ENCODE measurements at regions of chr19 and their contacts with region 1.

Region 1: DNA sequence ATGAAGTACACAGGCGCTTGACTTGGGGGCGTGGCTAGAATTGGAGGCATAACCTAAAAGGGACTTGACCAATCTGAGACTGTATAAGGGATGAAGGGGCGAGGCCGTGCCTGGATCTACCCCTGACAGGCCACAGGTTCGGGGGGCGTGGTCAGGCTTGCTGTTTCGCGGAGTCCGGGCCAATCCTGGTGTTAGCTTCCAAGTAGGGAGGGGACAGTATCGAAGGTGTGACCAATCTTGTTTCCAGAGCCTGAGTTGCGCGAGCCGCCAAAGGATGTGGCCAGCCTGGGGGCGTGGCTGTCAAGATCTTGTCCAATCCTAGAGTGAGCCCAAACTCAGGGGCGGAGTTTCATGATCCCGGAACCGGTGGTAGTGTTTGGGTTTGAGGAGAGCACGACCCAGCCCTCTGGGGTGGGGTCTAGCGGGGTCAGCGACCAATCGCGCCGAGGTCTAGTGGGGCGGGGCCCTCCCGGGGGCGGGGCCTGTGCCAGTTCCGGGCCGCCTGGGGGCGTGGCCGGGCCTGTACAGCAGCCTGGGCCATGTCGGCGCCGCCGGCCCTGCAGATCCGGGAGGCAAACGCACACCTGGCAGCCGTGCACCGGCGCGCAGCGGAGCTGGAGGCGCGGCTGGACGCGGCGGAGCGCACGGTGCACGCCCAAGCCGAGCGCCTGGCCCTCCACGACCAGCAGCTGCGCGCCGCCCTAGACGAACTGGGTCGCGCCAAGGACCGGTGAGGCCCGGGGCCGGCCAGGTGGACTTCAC is at the start of gene VMAC:
- DNase-seq: peak; percentile 100
- H3K4me3 ChIP-seq: peak within 1 kb of the TSS; percentile 91 to 95 (median 94)
- H3K4me3 Mint-ChIP-seq: peak within 1 kb of the TSS; percentile 83 to 94
- H3K27ac ChIP-seq: peak within 1 kb of the TSS; percentile 95 to 96
- H3K27ac Mint-ChIP-seq: peak within 1 kb of the TSS; percentile 95 to 99 (median 98)
- H3K4me1 ChIP-seq: peaks cover 19 to 22% of the 10 kb centered on the region in 2 donors
- H3K4me1 Mint-ChIP-seq: peaks cover 18% of the 10 kb centered on the region
- H3K27me3 ChIP-seq: no peaks in the 10 kb centered on the region
- H3K27me3 Mint-ChIP-seq: peaks cover 0 to 2% (median 0%) of the 10 kb centered on the region in 3 donors
- CTCF ChIP-seq: no peak
- polyA plus RNA-seq, gene VMAC: 3.1 to 13.0 (median 4.3) TPM

Region 2: DNA sequence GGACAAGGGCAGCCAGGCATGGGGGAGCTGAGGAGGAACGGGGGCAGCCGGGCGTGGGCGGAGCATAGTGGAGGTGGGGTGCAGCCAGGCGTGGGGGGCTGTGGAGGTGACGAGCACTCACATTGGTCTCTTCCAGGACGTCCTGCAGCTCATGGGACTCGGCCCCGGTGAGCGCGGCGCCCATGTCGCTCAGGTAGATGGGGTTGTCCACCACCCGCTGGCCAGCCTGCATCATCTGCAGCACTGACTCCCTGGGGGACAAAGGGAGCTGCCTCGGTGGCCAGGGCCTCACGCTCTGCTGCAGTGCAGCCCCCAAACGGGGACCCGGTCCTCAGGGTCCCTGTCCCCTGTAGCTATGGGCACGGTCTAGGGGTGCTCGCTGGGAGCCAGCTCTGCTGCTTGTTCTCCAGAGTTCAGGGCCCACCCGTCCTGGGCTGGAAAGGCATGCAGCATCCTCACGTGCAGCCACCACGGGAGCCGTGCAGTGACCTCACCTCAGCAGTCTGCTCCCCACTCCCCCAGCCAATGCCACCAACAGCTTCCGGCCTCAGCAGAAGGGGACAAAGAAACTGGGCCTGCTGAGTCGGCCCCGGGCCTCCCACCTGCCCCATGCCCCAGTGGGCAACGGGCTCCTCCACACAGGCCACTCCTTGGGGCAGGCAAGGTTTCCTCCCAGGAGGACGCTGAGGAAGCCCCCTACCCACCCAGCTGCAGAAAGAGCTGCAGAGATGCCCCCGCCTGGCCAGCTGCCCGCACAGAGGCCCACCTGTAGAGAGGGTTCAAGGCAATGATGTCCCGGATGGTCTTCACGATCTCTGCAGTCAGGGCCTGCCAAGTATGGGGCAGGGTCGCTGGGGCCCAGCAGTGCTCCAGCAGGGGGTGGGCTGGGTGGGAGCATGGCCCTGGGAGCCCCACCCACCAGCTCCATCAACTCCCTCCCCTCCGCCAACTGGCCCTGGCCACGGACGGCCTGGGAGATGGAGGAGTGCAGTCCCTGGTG is 196.7 kb before region 1 on chr19:
- intact Hi-C with region 1: no loop called
- DNase-seq: no peak
- H3K4me3 ChIP-seq: no peak overlapping the region
- H3K4me3 Mint-ChIP-seq: no peak overlapping the region
- H3K27ac ChIP-seq: no peak overlapping the region
- H3K27ac Mint-ChIP-seq: peak overlapping the region in 1 of 7 donors; percentile 26
- H3K4me1 ChIP-seq: no peaks in the 10 kb centered on the region
- H3K4me1 Mint-ChIP-seq: no peaks in the 10 kb centered on the region
- H3K27me3 ChIP-seq: no peaks in the 10 kb centered on the region
- H3K27me3 Mint-ChIP-seq: no peaks in the 10 kb centered on the region
- CTCF ChIP-seq: no peak

Region 3: GRCh38 chr19:5790573-5791520 is 113.7 kb before region 1 on chr19 and contains the start of gene DUS3L:
- intact Hi-C with region 1: loop called (anchors 2 to 5 kb)
- DNase-seq: peak; percentile 96 to 97 (median 96)
- H3K4me3 ChIP-seq: peak within 1 kb of the TSS; percentile 47 to 86 (median 67)
- H3K4me3 Mint-ChIP-seq: peak within 1 kb of the TSS; percentile 100
- H3K27ac ChIP-seq: peak within 1 kb of the TSS; percentile 91 to 97
- H3K27ac Mint-ChIP-seq: peak within 1 kb of the TSS; percentile 100
- H3K4me1 ChIP-seq: peaks cover 6 to 21% of the 10 kb centered on the region in 2 donors
- H3K4me1 Mint-ChIP-seq: peaks cover 10% of the 10 kb centered on the region
- H3K27me3 ChIP-seq: no peaks in the 10 kb centered on the region
- H3K27me3 Mint-ChIP-seq: peaks cover 1 to 3% (median 3%) of the 10 kb centered on the region in 3 donors
- CTCF ChIP-seq: no peak
- polyA plus RNA-seq, gene DUS3L: 17.4 to 40.2 (median 23.4) TPM

Region 4: GRCh38 chr19:5977785-5978605 is 73.5 kb after region 1 on chr19 and contains the start of gene RANBP3:
- intact Hi-C with region 1: loop called (anchors 5 to 10 kb)
- DNase-seq: peak; percentile 99 to 100 (median 99)
- H3K4me3 ChIP-seq: peak within 1 kb of the TSS; percentile 72 to 91 (median 91)
- H3K4me3 Mint-ChIP-seq: peak within 1 kb of the TSS; percentile 85 to 91
- H3K27ac ChIP-seq: peak within 1 kb of the TSS; percentile 93
- H3K27ac Mint-ChIP-seq: peak within 1 kb of the TSS; percentile 82 to 95 (median 95)
- H3K4me1 ChIP-seq: peaks cover 23 to 32% of the 10 kb centered on the region in 2 donors
- H3K4me1 Mint-ChIP-seq: peaks cover 40% of the 10 kb centered on the region
- H3K27me3 ChIP-seq: no peaks in the 10 kb centered on the region
- H3K27me3 Mint-ChIP-seq: no peaks in the 10 kb centered on the region
- CTCF ChIP-seq: no peak
- polyA plus RNA-seq, gene RANBP3: 4.5 to 49.5 (median 8.1) TPM

Region 5: GRCh38 chr19:6056801-6057650 is 152.5 kb after region 1 on chr19:
- intact Hi-C with region 1: loop called in 1 of 2 experiments (anchors 10 kb)
- DNase-seq: peak; percentile 98 to 100 (median 99)
- H3K4me3 ChIP-seq: peak overlapping the region in 2 of 3 experiments; percentile 8 to 41
- H3K4me3 Mint-ChIP-seq: peak overlapping the region; percentile 66 to 81
- H3K27ac ChIP-seq: peak overlapping the region; percentile 94 to 97
- H3K27ac Mint-ChIP-seq: peak overlapping the region; percentile 98 to 100 (median 99)
- H3K4me1 ChIP-seq: peaks cover 59% of the 10 kb centered on the region in 2 donors
- H3K4me1 Mint-ChIP-seq: peaks cover 65% of the 10 kb centered on the region
- H3K27me3 ChIP-seq: no peaks in the 10 kb centered on the region
- H3K27me3 Mint-ChIP-seq: peaks cover 0 to 9% (median under 1%) of the 10 kb centered on the region in 3 donors
- CTCF ChIP-seq: no peak

Region 6: DNA sequence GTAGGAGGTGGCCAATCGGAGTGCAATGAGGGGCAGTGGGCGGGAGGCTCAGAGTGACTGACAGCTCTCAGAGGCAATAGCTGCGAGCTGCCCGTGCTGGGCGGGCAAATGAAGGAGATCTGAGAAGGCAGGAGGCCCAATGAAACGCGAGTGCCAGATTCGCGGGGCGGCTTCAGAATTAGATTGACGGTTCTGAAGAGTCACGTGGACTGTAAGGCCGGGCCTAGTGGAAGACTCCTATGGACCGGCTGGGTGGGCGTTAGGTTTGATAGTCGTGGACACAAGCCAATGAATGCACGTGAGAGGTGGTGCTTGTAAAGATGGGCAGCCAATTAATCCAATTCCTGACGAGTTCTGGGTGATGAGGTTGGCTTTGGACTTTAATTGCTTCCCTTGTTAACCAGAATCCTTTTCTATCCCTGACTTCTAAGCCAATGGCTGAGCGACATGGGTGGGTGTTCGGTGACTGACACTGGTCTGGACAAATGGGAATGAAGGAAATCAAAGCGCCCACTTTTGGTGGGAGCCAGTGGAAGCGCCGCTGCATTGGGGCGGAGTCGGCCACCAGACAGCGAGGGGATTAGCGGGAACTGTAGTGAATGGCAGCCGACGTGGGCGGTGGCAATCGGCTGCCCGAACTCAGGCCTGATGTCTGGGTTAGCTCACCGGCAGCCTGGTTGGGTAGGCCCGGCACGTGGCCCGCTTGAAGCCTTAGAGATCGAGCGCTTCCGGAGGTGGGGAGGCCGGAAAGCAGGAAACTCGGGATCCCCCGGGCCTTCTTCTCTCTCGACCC is 520.6 kb after region 1 on chr19:
- intact Hi-C with region 1: loop called in 1 of 2 experiments (anchors 10 kb)
- DNase-seq: peak; percentile 100
- H3K4me3 ChIP-seq: peak overlapping the region in 2 of 3 experiments; percentile 29 to 52
- H3K4me3 Mint-ChIP-seq: peak overlapping the region; percentile 69 to 75
- H3K27ac ChIP-seq: peak overlapping the region; percentile 83 to 85
- H3K27ac Mint-ChIP-seq: peak overlapping the region; percentile 86 to 95 (median 91)
- H3K4me1 ChIP-seq: peaks cover 23 to 34% of the 10 kb centered on the region in 2 donors
- H3K4me1 Mint-ChIP-seq: peaks cover 37% of the 10 kb centered on the region
- H3K27me3 ChIP-seq: no peaks in the 10 kb centered on the region
- H3K27me3 Mint-ChIP-seq: peaks cover 0 to 12% (median 6%) of the 10 kb centered on the region in 3 donors
- CTCF ChIP-seq: no peak

Measured in CD14-positive monocyte (primary cell).